WTC11 (cell line): ENCODE measurements at regions of chr11 and their contacts with region 1.

Region 1: GRCh38 chr11:47399860-47400767 is 8.3 kb upstream of the SLC39A13 start:
- DNase-seq: peak; percentile 46
- ATAC-seq: peak; percentile 69
- H3K4me3 Mint-ChIP-seq: peak overlapping the region; percentile 79
- H3K27ac Mint-ChIP-seq: peak overlapping the region; percentile 97
- H3K4me1 Mint-ChIP-seq: peaks cover 31% of the 10 kb centered on the region
- H3K27me3 Mint-ChIP-seq: no peaks in the 10 kb centered on the region
- CTCF ChIP-seq: no peak

Region 2: DNA sequence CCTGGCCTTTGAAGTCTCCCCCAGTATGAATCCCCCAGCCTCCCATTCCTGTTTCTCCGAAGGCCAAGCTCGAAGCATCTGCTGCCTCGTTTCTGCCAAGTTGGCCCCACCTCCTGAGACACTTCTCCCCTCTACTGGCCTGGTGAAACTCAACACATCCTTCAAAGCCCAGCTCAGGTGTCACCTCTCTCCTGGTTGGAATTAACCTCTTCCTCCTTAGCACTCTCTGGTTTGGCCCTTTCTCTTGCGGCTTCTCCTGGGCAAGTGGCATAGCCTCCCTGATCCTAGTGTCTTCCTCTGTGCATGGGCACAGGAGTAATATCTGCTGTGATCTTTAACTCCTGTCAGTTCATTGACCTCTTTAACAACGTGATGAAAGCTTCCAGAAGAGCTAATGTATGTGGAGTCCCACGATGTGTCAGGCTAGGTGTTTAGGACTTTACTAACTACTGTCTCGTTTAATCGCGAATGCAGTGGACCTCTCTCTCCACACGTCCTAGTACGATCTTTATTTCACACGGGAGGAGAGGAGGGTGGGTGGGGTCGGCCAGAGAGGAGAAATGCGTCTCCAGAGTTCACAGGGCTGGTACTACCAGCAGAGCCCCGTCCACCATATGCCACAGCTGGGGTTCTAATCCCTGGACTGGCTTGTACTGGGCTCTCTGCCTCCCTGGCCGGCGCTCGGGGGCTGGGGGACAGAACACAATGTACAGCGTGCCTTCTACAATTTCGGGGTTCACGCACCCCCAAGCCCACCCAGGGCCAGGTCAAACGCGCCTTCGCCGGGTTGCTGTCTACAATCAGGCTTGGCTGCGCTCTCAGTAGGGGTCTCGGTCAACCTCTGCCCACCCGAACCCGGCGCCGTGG is 579.5 kb after region 1 on chr11:
- CTCF ChIA-PET with region 1: no interaction called
- POLR2A ChIA-PET with region 1: interaction called, 10 read pairs
- DNase-seq: peak; percentile 44
- ATAC-seq: peak; percentile 58
- H3K4me3 Mint-ChIP-seq: peak overlapping the region; percentile 64
- H3K27ac Mint-ChIP-seq: peak overlapping the region; percentile 85
- H3K4me1 Mint-ChIP-seq: peaks cover 30% of the 10 kb centered on the region
- H3K27me3 Mint-ChIP-seq: peaks cover 8% of the 10 kb centered on the region
- CTCF ChIP-seq: no peak